AG04450 (cell line): ENCODE measurements at regions of chr12 and their contacts with region 1.

Region 1: GRCh38 chr12:51351913-51352532 is 5.5 kb upstream of the CELA1 start:
- DNase-seq: peak; percentile 30
- H3K4me3 ChIP-seq: no peak overlapping the region
- H3K27ac ChIP-seq: no peak overlapping the region
- H3K27me3 ChIP-seq: no peaks in the 10 kb centered on the region
- CTCF ChIP-seq: peak; percentile 76

Region 2: GRCh38 chr12:51326762-51327439 is 25.1 kb before region 1 on chr12:
- CTCF ChIA-PET with region 1: no interaction called
- POLR2A ChIA-PET with region 1: interaction called, 10 read pairs
- DNase-seq: no peak
- H3K4me3 ChIP-seq: no peak overlapping the region
- H3K27ac ChIP-seq: peak overlapping the region; percentile 34
- H3K27me3 ChIP-seq: no peaks in the 10 kb centered on the region
- CTCF ChIP-seq: no peak